Gastrocnemius medialis (tissue), 4 donors: ENCODE measurements at regions of chr14 and their contacts with region 1.

Region 1: DNA sequence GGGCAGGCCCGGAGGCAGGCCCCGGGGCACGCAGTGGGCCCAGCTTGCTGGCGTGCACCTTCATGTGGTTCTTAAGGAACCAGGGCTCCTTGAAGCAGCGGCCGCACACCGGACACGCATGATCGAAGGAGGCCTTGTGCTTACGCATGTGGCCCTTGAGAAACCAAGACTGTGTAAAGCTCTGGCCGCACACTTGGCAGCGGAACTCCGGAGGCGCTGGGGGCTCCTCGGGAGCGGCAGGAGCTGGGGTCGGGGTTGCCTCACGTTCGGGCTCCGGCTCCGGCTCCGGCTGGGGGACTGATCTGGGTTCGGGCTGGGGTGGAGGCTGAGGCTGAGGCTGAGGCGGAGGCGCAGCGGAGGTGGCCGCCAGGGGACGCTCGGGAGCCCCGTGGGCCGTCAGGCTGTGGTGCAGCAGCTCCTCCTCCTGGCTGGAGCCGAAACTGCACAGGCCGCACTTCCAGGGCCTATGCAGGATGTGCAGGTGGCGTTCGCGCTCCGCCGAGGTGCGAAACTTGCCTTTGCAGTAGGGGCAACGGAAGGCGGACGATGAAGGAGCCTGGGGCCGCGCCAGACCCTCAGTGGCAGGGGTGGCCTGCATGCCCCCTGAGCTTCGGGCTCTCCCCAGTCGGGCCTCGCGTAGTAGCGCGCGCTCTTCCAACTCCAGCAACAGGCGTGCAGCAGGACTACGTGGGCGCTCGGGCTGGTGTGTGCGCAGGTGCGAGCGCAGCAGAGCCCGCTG is 6.0 kb downstream of the ZNF219 start:
- DNase-seq: peak; percentile 64 to 74
- ATAC-seq: peak; percentile 70 to 84
- H3K4me3 ChIP-seq: no peak overlapping the region
- H3K27ac ChIP-seq: peak overlapping the region in 2 of 4 donors; percentile 33 to 63
- H3K4me1 ChIP-seq: peaks cover 3 to 14% of the 10 kb centered on the region in 2 donors
- H3K27me3 ChIP-seq: no peaks in the 10 kb centered on the region
- CTCF ChIP-seq: peak; percentile 100
- POLR2A ChIP-seq: no peak

Region 2: DNA sequence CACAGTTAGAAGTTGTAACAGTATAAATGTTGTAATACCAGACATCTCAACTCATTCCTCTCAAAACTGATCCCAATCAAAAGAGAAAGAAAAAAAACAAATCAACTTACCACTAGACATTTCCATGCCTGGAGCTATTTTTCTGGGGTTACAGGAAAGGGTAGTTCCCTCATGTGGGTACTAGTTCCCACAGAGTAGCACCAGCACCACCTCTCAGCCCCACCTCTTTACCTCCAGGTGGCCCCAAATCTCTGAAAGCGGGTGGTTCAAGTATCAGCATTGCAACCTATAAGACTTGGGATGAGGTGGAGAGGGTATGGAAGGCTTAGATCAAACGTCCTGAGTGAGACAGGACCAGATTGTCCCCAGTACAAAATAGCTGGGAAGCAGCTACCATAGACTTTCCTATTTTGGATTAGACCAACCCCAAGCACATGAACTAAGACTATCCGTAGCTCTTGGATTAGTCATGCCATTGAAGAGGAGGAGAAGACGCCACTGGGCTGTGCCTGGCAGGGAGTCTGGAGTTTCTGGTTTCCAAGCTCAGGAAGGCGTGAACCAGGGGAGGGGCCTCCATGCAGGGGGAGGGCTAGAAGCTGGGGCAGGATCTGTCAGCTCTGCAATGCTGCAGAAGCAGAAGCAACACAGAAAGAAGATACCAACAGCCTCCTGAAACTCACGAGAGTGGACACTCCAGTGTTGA is 93.6 kb before region 1 on chr14 and contains the start of gene SLC39A2:
- in situ Hi-C with region 1: no loop called
- intact Hi-C with region 1: no loop called
- DNase-seq: peak in 1 of 2 donors; percentile 62
- ATAC-seq: peak; percentile 19 to 67
- H3K4me3 ChIP-seq: no peak within 1 kb of the TSS
- H3K27ac ChIP-seq: no peak within 1 kb of the TSS
- H3K4me1 ChIP-seq: no peaks in the 10 kb centered on the region
- H3K27me3 ChIP-seq: no peaks in the 10 kb centered on the region
- CTCF ChIP-seq: no peak
- POLR2A ChIP-seq: no peak
- total RNA-seq, gene SLC39A2: not detected

Region 3: DNA sequence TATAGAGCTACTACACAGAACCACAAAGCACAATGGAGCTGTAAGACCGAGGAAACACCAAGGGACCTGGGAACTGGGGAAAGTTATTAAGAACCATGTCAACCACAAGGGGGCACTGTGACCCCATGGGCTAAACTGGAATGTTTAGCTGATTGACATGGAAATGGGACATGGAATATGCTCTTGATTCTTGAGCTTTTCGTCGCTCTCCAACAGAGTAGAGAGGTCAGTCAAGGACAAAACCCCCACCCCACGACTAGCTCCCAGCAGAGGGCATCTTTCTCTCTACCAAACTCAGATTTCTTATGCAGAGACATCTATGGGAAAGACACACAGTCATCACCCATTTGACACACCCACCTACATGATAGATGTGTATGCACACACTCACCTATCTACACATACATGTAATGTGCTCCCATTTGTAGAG is 77.7 kb before region 1 on chr14:
- in situ Hi-C with region 1: loop called in 2 of 4 experiments (anchors 10 kb)
- intact Hi-C with region 1: loop called (anchors 1 kb)
- DNase-seq: peak; percentile 78 to 86
- ATAC-seq: peak; percentile 72 to 88
- H3K4me3 ChIP-seq: no peak overlapping the region
- H3K27ac ChIP-seq: peak overlapping the region; percentile 97 to 100 (median 100)
- H3K4me1 ChIP-seq: peaks cover 51 to 56% of the 10 kb centered on the region in 2 donors
- H3K27me3 ChIP-seq: no peaks in the 10 kb centered on the region
- CTCF ChIP-seq: peak; percentile 96 to 99 (median 98)
- POLR2A ChIP-seq: no peak

Region 4: GRCh38 chr14:21071225-21072030 is 21.0 kb before region 1 on chr14:
- in situ Hi-C with region 1: no loop called
- intact Hi-C with region 1: loop called (anchors 1 kb)
- DNase-seq: peak; percentile 55 to 65
- ATAC-seq: peak; percentile 21 to 37
- H3K4me3 ChIP-seq: peak overlapping the region; percentile 68 to 83 (median 74)
- H3K27ac ChIP-seq: peak overlapping the region; percentile 84 to 91 (median 88)
- H3K4me1 ChIP-seq: peaks cover 17 to 30% of the 10 kb centered on the region in 2 donors
- H3K27me3 ChIP-seq: no peaks in the 10 kb centered on the region
- CTCF ChIP-seq: no peak
- POLR2A ChIP-seq: peak in 1 of 2 donors; percentile 19

Region 5: GRCh38 chr14:21112255-21112654 is 19.8 kb after region 1 on chr14:
- in situ Hi-C with region 1: no loop called
- intact Hi-C with region 1: no loop called
- DNase-seq: no peak
- ATAC-seq: no peak
- H3K4me3 ChIP-seq: no peak overlapping the region
- H3K27ac ChIP-seq: no peak overlapping the region
- H3K4me1 ChIP-seq: peaks cover 0 to 1% of the 10 kb centered on the region in 2 donors
- H3K27me3 ChIP-seq: no peaks in the 10 kb centered on the region
- CTCF ChIP-seq: no peak
- POLR2A ChIP-seq: no peak